Endothelial cell of umbilical vein (primary cell): ENCODE measurements at regions of chr3 and their contacts with region 1.

Region 1: GRCh38 chr3:4656059-4656458 is 162.9 kb downstream of the ITPR1 start:
- DNase-seq: peak; percentile 81
- H3K4me3 ChIP-seq: no peak overlapping the region
- H3K27ac ChIP-seq: peak overlapping the region; percentile 48
- H3K4me1 ChIP-seq: peaks cover 11% of the 10 kb centered on the region
- H3K27me3 ChIP-seq: no peaks in the 10 kb centered on the region
- CTCF ChIP-seq: peak; percentile 91 to 92
- POLR2A ChIP-seq: no peak

Region 2: DNA sequence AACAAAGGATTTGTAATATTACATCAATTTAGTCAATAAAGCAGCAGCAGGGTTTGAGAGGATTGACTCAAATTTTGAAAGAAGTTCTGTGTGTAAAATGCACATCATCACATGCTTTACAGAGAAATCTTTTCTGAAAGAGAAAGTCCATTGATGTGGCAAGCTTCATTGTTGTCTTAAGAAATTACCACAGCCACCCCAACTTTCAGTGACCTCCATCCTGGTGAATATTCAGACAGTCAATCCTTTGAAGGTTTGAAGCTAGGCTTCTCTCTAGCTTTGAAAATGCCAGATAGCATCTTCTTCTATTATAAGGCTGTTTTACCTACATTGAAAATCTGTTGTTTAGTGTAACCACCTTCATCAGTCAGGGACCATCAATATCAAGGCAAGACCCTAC is 404.6 kb before region 1 on chr3:
- CTCF ChIA-PET with region 1: no interaction called
- POLR2A ChIA-PET with region 1: no interaction called
- dilution Hi-C with region 1: no loop called
- intact Hi-C with region 1: no loop called
- DNase-seq: no peak
- H3K4me3 ChIP-seq: no peak overlapping the region
- H3K27ac ChIP-seq: no peak overlapping the region
- H3K4me1 ChIP-seq: no peaks in the 10 kb centered on the region
- H3K27me3 ChIP-seq: no peaks in the 10 kb centered on the region
- CTCF ChIP-seq: no peak
- POLR2A ChIP-seq: no peak

Region 3: GRCh38 chr3:4429648-4430350 is 226.3 kb before region 1 on chr3:
- CTCF ChIA-PET with region 1: no interaction called
- POLR2A ChIA-PET with region 1: no interaction called
- dilution Hi-C with region 1: no loop called
- intact Hi-C with region 1: no loop called
- DNase-seq: peak; percentile 20
- H3K4me3 ChIP-seq: no peak overlapping the region
- H3K27ac ChIP-seq: no peak overlapping the region
- H3K4me1 ChIP-seq: no peaks in the 10 kb centered on the region
- H3K27me3 ChIP-seq: no peaks in the 10 kb centered on the region
- CTCF ChIP-seq: no peak
- POLR2A ChIP-seq: no peak

Region 4: GRCh38 chr3:5057857-5058324 is 401.8 kb after region 1 on chr3:
- CTCF ChIA-PET with region 1: interaction called, 43 read pairs
- POLR2A ChIA-PET with region 1: no interaction called
- dilution Hi-C with region 1: no loop called
- intact Hi-C with region 1: loop called (anchors 1 kb)
- DNase-seq: peak; percentile 85
- H3K4me3 ChIP-seq: no peak overlapping the region
- H3K27ac ChIP-seq: no peak overlapping the region
- H3K4me1 ChIP-seq: no peaks in the 10 kb centered on the region
- H3K27me3 ChIP-seq: peaks cover 0 to 2% of the 10 kb centered on the region in 2 experiments
- CTCF ChIP-seq: peak; percentile 59 to 65
- POLR2A ChIP-seq: no peak

Region 5: GRCh38 chr3:5122030-5122740 is 466.1 kb after region 1 on chr3 and contains the start of gene ARL8B:
- CTCF ChIA-PET with region 1: no interaction called
- POLR2A ChIA-PET with region 1: no interaction called
- dilution Hi-C with region 1: no loop called
- intact Hi-C with region 1: loop called (anchors 1 kb)
- DNase-seq: peak; percentile 87
- H3K4me3 ChIP-seq: peak within 1 kb of the TSS; percentile 61 to 95 (median 79)
- H3K27ac ChIP-seq: peak within 1 kb of the TSS; percentile 75
- H3K4me1 ChIP-seq: peaks cover 10% of the 10 kb centered on the region
- H3K27me3 ChIP-seq: no peaks in the 10 kb centered on the region
- CTCF ChIP-seq: peak; percentile 93 to 99
- POLR2A ChIP-seq: peak; percentile 80
- total RNA-seq, gene ARL8B: 58.0 and 58.2 TPM in 2 replicates

Region 6: DNA sequence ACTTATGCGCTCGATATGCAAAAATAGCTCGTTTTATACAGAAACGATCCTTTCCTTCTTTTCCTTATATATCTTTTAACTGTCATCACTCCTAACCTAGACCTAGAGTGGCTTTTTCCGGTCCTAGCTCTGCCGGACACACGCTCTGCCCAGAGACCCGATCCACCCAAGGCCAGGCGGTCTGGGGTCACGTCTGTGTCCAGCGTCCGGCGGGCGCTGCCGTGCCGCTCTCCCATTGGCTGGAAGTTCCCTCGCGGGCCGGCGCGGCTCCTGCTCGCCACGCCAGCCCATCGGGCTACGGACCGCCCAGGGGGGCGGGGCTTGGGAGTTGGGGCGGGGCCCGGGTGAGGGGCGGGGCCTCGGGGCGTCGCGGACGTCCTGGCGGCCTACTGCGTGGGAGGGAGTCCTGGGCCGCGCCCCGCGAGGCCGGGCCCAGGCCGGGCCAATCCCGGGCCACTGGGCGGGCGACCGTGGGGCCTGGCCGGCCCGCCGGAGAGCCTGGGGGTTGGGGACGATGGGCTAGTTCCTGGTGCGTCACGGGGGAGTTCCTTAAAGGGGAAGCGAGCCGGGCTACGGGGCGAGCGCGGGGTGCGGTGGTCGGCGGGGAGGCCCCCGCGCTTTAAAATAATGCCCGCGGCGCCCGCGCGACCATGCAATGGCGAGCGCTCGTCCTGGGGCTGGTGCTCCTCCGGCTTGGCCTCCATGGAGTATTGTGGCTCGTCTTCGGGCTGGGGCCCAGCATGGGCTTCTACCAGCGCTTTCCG is 531.3 kb after region 1 on chr3 and contains the start of gene EDEM1:
- CTCF ChIA-PET with region 1: no interaction called
- POLR2A ChIA-PET with region 1: no interaction called
- dilution Hi-C with region 1: no loop called
- intact Hi-C with region 1: loop called (anchors 1 kb)
- DNase-seq: peak; percentile 98
- H3K4me3 ChIP-seq: peak within 1 kb of the TSS; percentile 82 to 88 (median 83)
- H3K27ac ChIP-seq: peak within 1 kb of the TSS; percentile 92
- H3K4me1 ChIP-seq: peaks cover 21% of the 10 kb centered on the region
- H3K27me3 ChIP-seq: no peaks in the 10 kb centered on the region
- CTCF ChIP-seq: no peak
- POLR2A ChIP-seq: peak; percentile 72
- total RNA-seq, gene EDEM1: 61.1 and 65.4 TPM in 2 replicates

Region 7: DNA sequence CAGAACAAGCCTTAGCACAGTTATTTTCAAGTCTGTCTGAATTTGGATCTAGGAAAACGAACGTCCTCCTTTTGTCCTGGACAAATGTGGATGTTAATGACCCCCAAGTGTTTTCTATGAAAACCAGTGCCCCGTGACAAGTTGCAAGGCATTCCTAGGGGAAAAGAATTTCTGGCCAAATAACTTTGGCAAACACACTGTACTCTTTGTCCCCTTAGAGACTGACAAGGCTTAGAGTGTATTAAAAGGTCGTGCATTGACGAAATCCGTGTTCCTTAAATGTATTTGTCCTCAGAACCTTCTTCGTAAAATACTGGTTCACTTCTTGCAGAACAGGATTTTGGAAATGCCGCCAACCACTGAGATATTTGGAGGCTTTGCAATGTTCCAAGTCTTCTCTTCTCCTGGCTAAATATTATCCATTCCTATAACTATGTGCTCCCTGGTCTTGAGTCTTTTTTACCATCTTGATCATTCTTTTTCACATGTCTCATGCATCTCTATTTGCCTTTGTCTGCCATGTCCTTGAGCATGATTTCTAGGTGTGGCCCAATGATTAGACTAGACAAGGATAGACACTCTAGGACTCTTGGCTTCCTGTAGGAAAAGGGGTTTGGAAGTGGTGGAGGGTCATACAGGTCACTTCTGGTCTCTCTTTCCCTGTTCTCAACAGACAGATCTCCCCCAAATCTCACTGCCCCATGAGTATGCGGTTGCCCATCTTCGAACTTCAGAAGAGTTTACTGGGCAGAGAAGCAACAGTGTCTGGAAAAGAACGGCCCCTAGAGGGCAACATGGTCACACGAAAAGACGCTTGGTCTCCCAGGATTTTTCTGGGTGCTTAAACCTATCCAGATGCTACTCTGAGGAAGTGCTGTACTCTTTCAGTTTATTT is 649.0 kb after region 1 on chr3:
- CTCF ChIA-PET with region 1: no interaction called
- POLR2A ChIA-PET with region 1: no interaction called
- dilution Hi-C with region 1: no loop called
- intact Hi-C with region 1: loop called (anchors 1 kb)
- DNase-seq: peak; percentile 16
- H3K4me3 ChIP-seq: no peak overlapping the region
- H3K27ac ChIP-seq: no peak overlapping the region
- H3K4me1 ChIP-seq: no peaks in the 10 kb centered on the region
- H3K27me3 ChIP-seq: no peaks in the 10 kb centered on the region
- CTCF ChIP-seq: peak; percentile 29 to 43
- POLR2A ChIP-seq: no peak

Region 8: DNA sequence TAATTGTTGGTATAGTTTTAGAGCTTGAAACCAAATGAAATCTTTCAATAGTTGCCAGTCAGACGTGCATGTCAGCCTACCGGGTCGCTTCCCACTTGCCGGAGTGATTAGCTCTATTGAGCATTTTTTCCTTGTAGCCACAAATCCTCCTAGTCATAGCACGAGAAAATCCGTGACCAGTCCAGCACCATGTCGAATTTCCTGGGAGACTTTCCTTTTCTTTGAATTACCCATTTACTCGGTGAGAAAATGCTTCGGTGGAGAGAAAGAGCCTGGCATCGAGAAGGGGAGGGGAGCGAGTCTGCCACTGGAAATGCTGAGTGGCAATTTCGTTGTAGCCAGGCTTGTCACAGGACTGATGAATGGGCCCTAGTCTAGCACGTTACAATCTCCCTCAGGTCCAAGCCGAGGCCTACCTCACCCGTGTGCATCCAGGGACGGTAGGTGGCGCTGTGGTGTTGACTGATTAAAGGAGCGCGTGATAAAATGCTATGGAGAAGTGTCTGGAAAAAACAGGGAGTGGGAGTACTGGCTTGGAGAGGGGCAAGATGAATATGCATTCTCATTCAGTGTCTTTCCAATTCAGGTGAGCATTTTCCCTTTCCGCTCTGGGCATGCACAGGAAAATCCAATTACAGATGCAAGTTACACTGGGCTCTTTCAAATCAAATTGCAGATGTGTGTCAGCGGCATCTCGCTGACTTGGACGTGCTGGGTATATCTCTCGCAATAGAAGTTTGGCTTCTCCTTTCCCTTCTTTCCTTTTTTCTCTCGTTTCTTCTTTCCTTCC is 770.2 kb after region 1 on chr3:
- CTCF ChIA-PET with region 1: no interaction called
- POLR2A ChIA-PET with region 1: no interaction called
- dilution Hi-C with region 1: no loop called
- intact Hi-C with region 1: loop called (anchors 1 kb)
- DNase-seq: peak; percentile 45
- H3K4me3 ChIP-seq: no peak overlapping the region
- H3K27ac ChIP-seq: no peak overlapping the region
- H3K4me1 ChIP-seq: no peaks in the 10 kb centered on the region
- H3K27me3 ChIP-seq: no peaks in the 10 kb centered on the region
- CTCF ChIP-seq: peak; percentile 78 to 85
- POLR2A ChIP-seq: no peak